ENCODE measurements at regions of chr16 and their contacts with region 1.

Region 1: GRCh38 chr16:18801197-18801972 is at the start of gene ARL6IP1:
- DNase-seq: peak; percentile 98 to 100
- ATAC-seq: peak; percentile 92 to 99 (median 94)
- H3K4me3 ChIP-seq: peak within 1 kb of the TSS; percentile 83
- H3K4me3 Mint-ChIP-seq: peak within 1 kb of the TSS; percentile 96
- H3K27ac ChIP-seq: peak within 1 kb of the TSS; percentile 84
- H3K27ac Mint-ChIP-seq: peak within 1 kb of the TSS; percentile 94 to 95
- H3K4me1 ChIP-seq: peaks cover 28% of the 10 kb centered on the region
- H3K4me1 Mint-ChIP-seq: peaks cover 45 to 60% of the 10 kb centered on the region in 2 donors
- H3K27me3 ChIP-seq: no peaks in the 10 kb centered on the region
- H3K27me3 Mint-ChIP-seq: no peaks in the 10 kb centered on the region
- CTCF ChIP-seq: peak; percentile 82
- total RNA-seq, gene ARL6IP1: 138 to 143 (median 140) TPM

Region 2: GRCh38 chr16:18789850-18790724 is 11.3 kb before region 1 on chr16 and contains the start of gene RPS15A:
- intact Hi-C with region 1: loop called (anchors 1 kb)
- DNase-seq: peak; percentile 83 to 99
- ATAC-seq: peak; percentile 97 to 99 (median 97)
- H3K4me3 ChIP-seq: peak within 1 kb of the TSS; percentile 95
- H3K4me3 Mint-ChIP-seq: peak within 1 kb of the TSS; percentile 98
- H3K27ac ChIP-seq: peak within 1 kb of the TSS; percentile 71
- H3K27ac Mint-ChIP-seq: peak within 1 kb of the TSS; percentile 90 to 91
- H3K4me1 ChIP-seq: peaks cover 43% of the 10 kb centered on the region
- H3K4me1 Mint-ChIP-seq: peaks cover 45 to 48% of the 10 kb centered on the region in 2 donors
- H3K27me3 ChIP-seq: no peaks in the 10 kb centered on the region
- H3K27me3 Mint-ChIP-seq: no peaks in the 10 kb centered on the region
- CTCF ChIP-seq: no peak
- total RNA-seq, gene RPS15A: 1,225 to 1,687 (median 1,635) TPM

Region 3: DNA sequence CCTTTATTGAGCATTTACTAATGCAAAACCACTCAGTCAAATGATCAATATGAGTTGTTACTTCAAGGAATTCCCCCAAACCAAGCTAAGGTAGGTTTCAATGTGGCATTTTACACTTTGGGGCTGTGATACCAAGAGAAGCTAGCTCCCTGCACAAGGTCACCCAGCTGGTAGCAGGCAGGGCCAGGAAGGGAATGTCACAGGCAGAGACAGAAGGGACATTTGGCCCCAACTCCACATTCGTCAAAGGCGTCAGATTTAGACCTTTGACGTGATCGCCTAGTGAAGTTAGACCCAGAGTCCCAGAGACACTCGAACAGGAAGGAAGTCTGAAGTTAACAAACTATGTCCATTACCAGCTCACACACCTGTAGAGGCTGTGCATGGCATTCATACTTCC is 130.4 kb after region 1 on chr16:
- intact Hi-C with region 1: loop called (anchors 1 kb)
- DNase-seq: no peak
- ATAC-seq: no peak
- H3K4me3 ChIP-seq: no peak overlapping the region
- H3K4me3 Mint-ChIP-seq: no peak overlapping the region
- H3K27ac ChIP-seq: no peak overlapping the region
- H3K27ac Mint-ChIP-seq: no peak overlapping the region
- H3K4me1 ChIP-seq: peaks cover 5% of the 10 kb centered on the region
- H3K4me1 Mint-ChIP-seq: peaks cover 0 to 6% of the 10 kb centered on the region in 2 donors
- H3K27me3 ChIP-seq: no peaks in the 10 kb centered on the region
- H3K27me3 Mint-ChIP-seq: peaks cover 0 to 1% of the 10 kb centered on the region in 2 donors
- CTCF ChIP-seq: no peak

Region 4: DNA sequence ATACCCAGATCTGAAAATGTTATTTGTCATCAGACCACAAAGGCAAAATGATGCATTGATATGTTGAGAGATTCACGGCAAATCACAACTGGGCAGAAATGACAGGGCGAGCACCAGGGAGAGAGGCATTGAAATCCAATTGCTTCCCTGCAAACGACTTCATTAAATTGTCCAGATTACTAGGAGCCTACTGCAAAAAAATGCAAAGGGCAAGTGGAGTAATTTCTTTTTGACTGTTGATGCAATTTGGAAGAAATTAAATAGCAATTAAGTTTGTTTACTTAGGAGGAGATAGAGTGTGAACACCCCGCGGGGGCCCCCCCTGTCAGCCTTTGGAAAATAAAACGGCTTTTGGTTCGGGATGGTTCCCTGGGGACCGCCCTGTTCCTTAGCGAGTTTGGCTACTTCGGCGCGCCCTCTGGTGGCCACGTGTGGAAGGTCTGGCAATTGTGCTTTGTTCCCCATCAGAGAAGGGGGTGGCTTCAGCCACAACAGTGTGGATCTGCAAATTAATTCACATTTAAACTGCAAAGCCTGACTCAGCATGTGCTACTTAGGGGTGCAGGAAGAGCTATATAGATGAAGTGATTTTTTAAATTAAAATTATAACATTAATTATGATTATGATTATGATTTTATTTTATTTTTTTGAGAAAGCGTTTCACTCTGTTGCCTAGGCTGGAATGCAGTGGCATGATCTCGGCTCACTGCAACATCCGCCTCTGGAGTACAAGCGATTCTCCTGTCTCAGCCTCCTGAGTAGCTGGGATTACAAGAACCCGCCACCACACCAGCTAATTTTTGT is 167.9 kb after region 1 on chr16:
- intact Hi-C with region 1: loop called (anchors 5 kb)
- DNase-seq: peak; percentile 76 to 83
- ATAC-seq: peak; percentile 84 to 91 (median 91)
- H3K4me3 ChIP-seq: no peak overlapping the region
- H3K4me3 Mint-ChIP-seq: no peak overlapping the region
- H3K27ac ChIP-seq: no peak overlapping the region
- H3K27ac Mint-ChIP-seq: no peak overlapping the region
- H3K4me1 ChIP-seq: peaks cover 3% of the 10 kb centered on the region
- H3K4me1 Mint-ChIP-seq: peaks cover 0 to 9% of the 10 kb centered on the region in 2 donors
- H3K27me3 ChIP-seq: no peaks in the 10 kb centered on the region
- H3K27me3 Mint-ChIP-seq: no peaks in the 10 kb centered on the region
- CTCF ChIP-seq: peak; percentile 96

Region 5: GRCh38 chr16:19067349-19068236 is 266.2 kb after region 1 on chr16 and contains the start of gene COQ7:
- intact Hi-C with region 1: loop called (anchors 5 kb)
- DNase-seq: peak; percentile 98 to 100
- ATAC-seq: peak; percentile 86 to 95 (median 86)
- H3K4me3 ChIP-seq: peak within 1 kb of the TSS; percentile 53
- H3K4me3 Mint-ChIP-seq: peak within 1 kb of the TSS; percentile 92
- H3K27ac ChIP-seq: peak within 1 kb of the TSS; percentile 92
- H3K27ac Mint-ChIP-seq: peak within 1 kb of the TSS; percentile 99
- H3K4me1 ChIP-seq: peaks cover 12% of the 10 kb centered on the region
- H3K4me1 Mint-ChIP-seq: peaks cover 11 to 15% of the 10 kb centered on the region in 2 donors
- H3K27me3 ChIP-seq: no peaks in the 10 kb centered on the region
- H3K27me3 Mint-ChIP-seq: peaks cover 0 to 5% of the 10 kb centered on the region in 2 donors
- CTCF ChIP-seq: no peak
- total RNA-seq, gene COQ7: 16.3 to 17.9 (median 17.1) TPM